Endothelial cell of umbilical vein (primary cell): ENCODE measurements at regions of chr3 and their contacts with region 1.

Region 1: GRCh38 chr3:4350789-4351163 is 47.6 kb downstream of the SETMAR start:
- DNase-seq: no peak
- H3K4me3 ChIP-seq: peak overlapping the region; percentile 26 to 75 (median 49)
- H3K27ac ChIP-seq: peak overlapping the region; percentile 86
- H3K4me1 ChIP-seq: peaks cover 13% of the 10 kb centered on the region
- H3K27me3 ChIP-seq: no peaks in the 10 kb centered on the region
- CTCF ChIP-seq: peak; percentile 48 to 67
- POLR2A ChIP-seq: no peak

Region 2: DNA sequence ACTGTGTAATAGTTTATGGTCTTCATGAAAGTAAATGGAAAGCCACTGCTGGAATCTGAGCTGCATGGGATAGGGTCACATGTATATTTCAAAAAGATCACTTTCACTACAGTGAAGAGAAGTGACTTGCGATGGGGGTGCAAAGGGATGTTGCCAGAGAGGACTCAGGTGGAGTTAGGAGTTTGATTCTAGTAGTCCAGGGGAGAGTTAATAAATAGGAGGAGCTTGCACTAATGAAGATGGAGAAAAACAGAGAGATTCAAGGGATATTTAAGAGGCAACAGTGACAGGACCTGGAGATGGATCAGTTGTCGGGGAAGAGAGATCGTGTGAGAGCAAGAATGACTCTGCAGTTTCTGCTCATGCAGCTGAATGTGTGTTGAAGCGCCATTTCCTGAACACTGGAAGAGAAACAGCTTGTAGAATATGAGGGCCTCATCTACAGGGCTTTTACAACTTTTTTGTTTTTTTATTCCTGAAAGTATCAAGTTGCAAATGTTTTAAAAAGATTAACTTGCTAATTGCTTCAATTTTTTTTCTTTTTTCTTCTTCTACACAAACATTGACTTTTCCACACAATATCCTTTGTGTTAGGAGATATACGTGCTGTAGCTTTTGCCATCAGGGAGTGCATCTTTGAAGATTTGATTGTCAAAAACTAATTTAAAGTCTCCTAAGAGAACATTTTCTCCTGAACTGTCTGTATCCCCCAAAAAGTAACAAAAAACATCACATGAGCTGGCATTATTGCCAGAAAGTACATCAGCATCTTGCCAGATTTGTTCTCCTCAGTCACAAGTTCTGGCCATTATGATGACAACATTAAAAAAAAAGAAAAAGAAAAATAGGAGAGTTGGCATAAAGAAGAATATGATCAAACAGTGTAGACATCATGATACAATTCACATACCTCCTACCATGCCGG is 10.1 kb before region 1 on chr3:
- CTCF ChIA-PET with region 1: interaction called, 37 read pairs
- POLR2A ChIA-PET with region 1: no interaction called
- dilution Hi-C with region 1: no loop called
- intact Hi-C with region 1: no loop called
- DNase-seq: peak; percentile 28
- H3K4me3 ChIP-seq: no peak overlapping the region
- H3K27ac ChIP-seq: no peak overlapping the region
- H3K4me1 ChIP-seq: no peaks in the 10 kb centered on the region
- H3K27me3 ChIP-seq: no peaks in the 10 kb centered on the region
- CTCF ChIP-seq: no peak
- POLR2A ChIP-seq: no peak

Region 3: DNA sequence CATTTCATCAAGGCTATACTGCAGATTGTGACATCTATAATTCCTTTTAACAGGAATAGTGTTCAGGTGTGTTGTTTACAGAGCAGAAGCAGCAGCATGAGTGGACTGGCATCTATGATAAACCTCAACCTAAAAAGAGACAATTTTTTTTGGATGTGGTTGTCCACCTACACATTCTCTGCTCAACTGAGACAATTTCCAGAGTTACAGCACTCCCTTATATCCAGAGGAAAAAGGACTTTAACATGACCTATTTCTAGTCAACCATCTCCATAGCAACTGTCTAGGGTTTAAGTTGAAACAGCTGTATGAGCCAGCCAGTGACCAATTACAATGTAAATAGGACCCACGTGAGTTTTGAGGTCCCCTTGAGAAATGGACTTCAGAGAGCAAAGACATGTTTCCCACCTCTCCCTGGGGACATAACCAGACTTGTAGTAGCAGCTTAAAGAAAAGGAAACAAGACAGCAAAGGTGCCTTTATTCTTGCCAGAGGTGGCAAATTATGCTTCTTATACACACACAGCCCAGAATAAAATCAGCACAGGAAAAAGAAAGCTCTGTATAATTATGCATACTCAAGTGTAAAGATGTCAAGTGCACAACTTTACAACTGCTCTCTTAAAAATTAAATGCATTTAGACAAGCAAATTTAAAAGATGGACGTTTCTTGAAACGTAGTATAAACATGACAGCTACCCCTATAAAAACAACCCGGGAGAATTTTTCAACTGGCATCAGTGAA is 76.0 kb after region 1 on chr3:
- CTCF ChIA-PET with region 1: interaction called, 10 read pairs
- POLR2A ChIA-PET with region 1: no interaction called
- dilution Hi-C with region 1: no loop called
- intact Hi-C with region 1: no loop called
- DNase-seq: peak; percentile 46
- H3K4me3 ChIP-seq: no peak overlapping the region
- H3K27ac ChIP-seq: no peak overlapping the region
- H3K4me1 ChIP-seq: no peaks in the 10 kb centered on the region
- H3K27me3 ChIP-seq: no peaks in the 10 kb centered on the region
- CTCF ChIP-seq: no peak
- POLR2A ChIP-seq: no peak

Region 4: DNA sequence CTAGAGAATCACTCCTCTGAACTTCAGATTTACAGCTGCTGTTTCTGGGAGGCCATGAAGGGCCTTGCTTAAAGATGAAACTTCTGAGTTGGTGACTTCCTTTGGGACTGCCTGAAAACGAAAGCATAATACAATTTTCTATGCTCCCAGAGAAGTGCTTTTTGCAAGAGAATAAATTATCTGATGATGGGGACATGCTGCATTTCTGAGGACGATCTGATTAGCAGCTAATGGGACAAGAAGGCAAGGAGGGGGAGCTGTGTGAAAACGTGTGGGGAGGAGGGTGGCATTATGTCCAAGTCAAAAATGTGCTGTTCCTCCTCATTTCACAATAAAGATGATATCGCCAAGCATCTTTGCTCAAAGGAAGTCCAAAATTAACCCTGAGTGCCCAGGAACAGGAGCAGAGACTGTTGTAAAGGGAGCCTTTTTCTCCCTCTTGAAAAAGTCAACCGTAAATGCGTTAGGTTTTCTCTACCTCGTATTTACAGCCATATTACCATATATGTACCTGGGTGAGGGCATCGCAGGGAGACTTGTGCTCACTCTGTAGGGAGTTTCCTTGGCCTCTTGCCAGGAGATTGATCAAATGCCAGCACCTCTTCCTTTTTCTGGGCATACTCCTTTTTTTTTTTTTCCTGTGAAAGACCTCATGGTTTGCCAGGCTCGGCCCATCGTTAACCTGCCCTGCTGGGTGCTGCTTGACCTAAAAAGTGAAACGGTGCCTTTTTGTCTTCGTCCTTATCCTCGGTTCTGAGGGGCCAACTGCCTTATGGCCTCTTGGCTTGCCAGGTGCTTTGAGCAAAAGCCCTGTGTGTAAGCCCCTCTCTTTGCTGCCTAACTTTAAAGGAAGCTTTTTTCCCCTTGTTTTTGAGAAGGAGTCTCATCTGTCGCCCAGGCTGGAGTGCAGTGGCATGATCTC is 153.8 kb after region 1 on chr3:
- CTCF ChIA-PET with region 1: interaction called, 10 read pairs
- POLR2A ChIA-PET with region 1: no interaction called
- dilution Hi-C with region 1: no loop called
- intact Hi-C with region 1: no loop called
- DNase-seq: no peak
- H3K4me3 ChIP-seq: no peak overlapping the region
- H3K27ac ChIP-seq: no peak overlapping the region
- H3K4me1 ChIP-seq: peaks cover 3% of the 10 kb centered on the region
- H3K27me3 ChIP-seq: no peaks in the 10 kb centered on the region
- CTCF ChIP-seq: no peak
- POLR2A ChIP-seq: no peak

Region 5: GRCh38 chr3:4577721-4578120 is 226.9 kb after region 1 on chr3:
- CTCF ChIA-PET with region 1: interaction called, 44 read pairs
- POLR2A ChIA-PET with region 1: no interaction called
- dilution Hi-C with region 1: no loop called
- intact Hi-C with region 1: no loop called
- DNase-seq: no peak
- H3K4me3 ChIP-seq: no peak overlapping the region
- H3K27ac ChIP-seq: no peak overlapping the region
- H3K4me1 ChIP-seq: no peaks in the 10 kb centered on the region
- H3K27me3 ChIP-seq: peaks cover 0 to under 1% of the 10 kb centered on the region in 2 experiments
- CTCF ChIP-seq: no peak
- POLR2A ChIP-seq: no peak

Region 6: GRCh38 chr3:4978204-4978965 is 627.6 kb after region 1 on chr3:
- CTCF ChIA-PET with region 1: no interaction called
- POLR2A ChIA-PET with region 1: no interaction called
- dilution Hi-C with region 1: no loop called
- intact Hi-C with region 1: loop called (anchors 5 kb)
- DNase-seq: peak; percentile 98
- H3K4me3 ChIP-seq: peak overlapping the region; percentile 2 to 65 (median 63)
- H3K27ac ChIP-seq: peak overlapping the region; percentile 98
- H3K4me1 ChIP-seq: peaks cover 42% of the 10 kb centered on the region
- H3K27me3 ChIP-seq: no peaks in the 10 kb centered on the region
- CTCF ChIP-seq: no peak
- POLR2A ChIP-seq: peak; percentile 75